CD4-positive, alpha-beta memory T cell (primary cell): ENCODE measurements at regions of chr6 and their contacts with region 1.

Region 1: GRCh38 chr6:16761471-16762267 is 409 bp upstream of the ATXN1 start:
- DNase-seq: peak; percentile 87 to 96 (median 89)
- H3K4me3 ChIP-seq: peak overlapping the region; percentile 75 to 84
- H3K4me3 Mint-ChIP-seq: peak overlapping the region; percentile 91 to 100 (median 98)
- H3K27ac ChIP-seq: peak overlapping the region; percentile 99
- H3K27ac Mint-ChIP-seq: peak overlapping the region; percentile 97 to 100 (median 99)
- H3K4me1 ChIP-seq: peaks cover 57% of the 10 kb centered on the region
- H3K4me1 Mint-ChIP-seq: peaks cover 46 to 87% (median 57%) of the 10 kb centered on the region in 4 donors
- H3K27me3 ChIP-seq: no peaks in the 10 kb centered on the region
- H3K27me3 Mint-ChIP-seq: peaks cover 0 to 4% of the 10 kb centered on the region in 2 donors

Region 2: DNA sequence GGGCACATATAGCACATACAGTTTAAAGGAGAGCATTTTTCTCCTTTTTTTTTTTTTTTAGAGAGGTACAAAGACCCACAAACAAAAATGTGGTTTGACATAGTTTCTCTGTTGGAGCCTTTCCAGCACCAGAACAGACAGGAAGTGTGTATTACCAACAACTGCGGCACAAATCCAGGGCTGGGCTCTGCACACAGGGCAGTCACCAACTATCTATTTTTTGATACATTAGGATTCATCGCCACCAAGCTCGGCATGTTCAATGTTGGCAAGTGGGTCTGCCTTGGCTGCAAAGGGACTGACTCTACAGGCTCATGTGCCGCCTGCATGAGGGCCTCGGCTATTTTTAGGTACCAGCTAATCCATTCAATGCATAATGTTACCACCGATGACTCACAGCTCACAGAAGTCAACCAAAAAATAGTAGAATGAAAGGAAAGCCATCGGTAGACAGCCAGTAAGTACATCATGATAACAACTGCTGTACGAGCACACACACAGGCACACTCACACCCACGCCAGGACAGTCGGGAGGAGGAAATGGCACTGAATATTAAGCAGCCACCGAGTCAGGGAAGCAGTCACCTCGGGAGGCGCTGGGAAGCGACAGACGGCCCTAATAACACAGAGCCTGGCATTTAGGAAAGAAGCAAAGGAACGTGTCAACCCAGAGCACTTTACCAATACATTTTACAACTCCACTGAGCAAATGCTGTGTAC is 441.7 kb before region 1 on chr6:
- CTCF ChIA-PET with region 1: interaction called, 27 read pairs
- POLR2A ChIA-PET with region 1: interaction called, 14 read pairs
- intact Hi-C with region 1: loop called (anchors 2 kb)
- DNase-seq: peak; percentile 80 to 94 (median 86)
- H3K4me3 ChIP-seq: peak overlapping the region; percentile 19 to 41
- H3K4me3 Mint-ChIP-seq: peak overlapping the region; percentile 76 to 89 (median 83)
- H3K27ac ChIP-seq: peak overlapping the region; percentile 82
- H3K27ac Mint-ChIP-seq: peak overlapping the region; percentile 93 to 98 (median 97)
- H3K4me1 ChIP-seq: peaks cover 84% of the 10 kb centered on the region
- H3K4me1 Mint-ChIP-seq: peaks cover 47 to 84% (median 71%) of the 10 kb centered on the region in 4 donors
- H3K27me3 ChIP-seq: no peaks in the 10 kb centered on the region
- H3K27me3 Mint-ChIP-seq: no peaks in the 10 kb centered on the region

Region 3: DNA sequence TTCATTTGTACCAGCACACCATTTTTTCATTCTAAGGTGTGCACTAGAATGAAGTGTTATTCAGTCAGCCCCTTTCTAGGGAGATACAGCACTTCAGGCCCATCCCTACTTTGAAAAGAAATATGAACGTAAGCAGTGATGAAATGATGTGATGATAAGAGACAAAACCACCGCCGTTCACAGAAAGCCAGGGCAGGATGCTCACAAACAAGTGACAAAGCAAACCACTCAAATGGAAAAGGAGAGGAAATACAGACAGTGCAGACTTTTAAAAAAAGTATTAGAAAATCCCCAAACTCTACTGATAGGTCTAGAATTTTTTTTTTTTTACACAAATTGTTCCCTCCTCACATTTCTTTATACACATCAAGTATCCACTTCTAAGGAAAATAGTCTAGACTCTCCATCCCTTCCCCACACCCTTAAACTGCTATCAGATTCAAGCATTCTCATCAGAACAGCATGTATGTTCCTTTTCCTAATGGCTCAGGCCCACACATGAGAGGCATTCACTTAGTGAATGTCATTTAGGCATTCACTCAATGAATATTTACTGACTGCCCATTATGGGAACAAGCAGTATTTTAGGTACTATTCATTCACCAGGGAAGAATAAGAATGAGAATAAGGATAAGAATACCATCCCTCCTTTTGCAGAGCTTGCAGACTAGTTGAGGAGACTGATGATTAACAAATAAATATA is 279.8 kb before region 1 on chr6:
- CTCF ChIA-PET with region 1: interaction called, 3 read pairs
- POLR2A ChIA-PET with region 1: interaction called, 16 read pairs
- intact Hi-C with region 1: loop called (anchors 1 kb)
- DNase-seq: peak; percentile 84 to 92 (median 88)
- H3K4me3 ChIP-seq: no peak overlapping the region
- H3K4me3 Mint-ChIP-seq: peak overlapping the region; percentile 3 to 76 (median 52)
- H3K27ac ChIP-seq: peak overlapping the region; percentile 75
- H3K27ac Mint-ChIP-seq: peak overlapping the region; percentile 88 to 99 (median 95)
- H3K4me1 ChIP-seq: peaks cover 81% of the 10 kb centered on the region
- H3K4me1 Mint-ChIP-seq: peaks cover 66 to 88% (median 77%) of the 10 kb centered on the region in 4 donors
- H3K27me3 ChIP-seq: no peaks in the 10 kb centered on the region
- H3K27me3 Mint-ChIP-seq: no peaks in the 10 kb centered on the region

Region 4: DNA sequence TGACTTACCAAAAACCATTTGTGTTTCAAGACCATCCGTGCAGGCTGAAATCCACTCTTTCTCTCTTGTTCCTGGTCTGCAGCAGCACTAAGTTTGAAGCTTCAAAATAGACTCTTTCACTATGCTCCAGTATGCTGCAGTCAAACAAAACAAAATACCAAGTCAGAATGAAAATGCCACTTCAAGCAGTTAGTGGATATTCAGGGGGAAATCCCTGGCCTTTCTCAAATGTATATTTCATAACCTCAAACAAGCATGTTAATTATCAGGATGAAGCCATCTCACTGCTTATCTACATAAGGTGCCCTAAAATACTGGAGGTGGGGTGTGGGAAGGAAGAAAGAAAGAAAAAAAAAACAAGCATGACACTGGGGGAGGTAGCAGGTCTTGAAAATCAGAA is 103.9 kb before region 1 on chr6:
- CTCF ChIA-PET with region 1: interaction called, 4 read pairs
- POLR2A ChIA-PET with region 1: interaction called, 30 read pairs
- intact Hi-C with region 1: loop called (anchors 5 kb)
- DNase-seq: peak in 3 of 5 donors; percentile 29 to 43 (median 31)
- H3K4me3 ChIP-seq: no peak overlapping the region
- H3K4me3 Mint-ChIP-seq: peak overlapping the region; percentile 55 to 85 (median 68)
- H3K27ac ChIP-seq: peak overlapping the region; percentile 44
- H3K27ac Mint-ChIP-seq: peak overlapping the region; percentile 77 to 95 (median 92)
- H3K4me1 ChIP-seq: peaks cover 75% of the 10 kb centered on the region
- H3K4me1 Mint-ChIP-seq: peaks cover 59 to 78% (median 66%) of the 10 kb centered on the region in 4 donors
- H3K27me3 ChIP-seq: no peaks in the 10 kb centered on the region
- H3K27me3 Mint-ChIP-seq: no peaks in the 10 kb centered on the region

Region 5: DNA sequence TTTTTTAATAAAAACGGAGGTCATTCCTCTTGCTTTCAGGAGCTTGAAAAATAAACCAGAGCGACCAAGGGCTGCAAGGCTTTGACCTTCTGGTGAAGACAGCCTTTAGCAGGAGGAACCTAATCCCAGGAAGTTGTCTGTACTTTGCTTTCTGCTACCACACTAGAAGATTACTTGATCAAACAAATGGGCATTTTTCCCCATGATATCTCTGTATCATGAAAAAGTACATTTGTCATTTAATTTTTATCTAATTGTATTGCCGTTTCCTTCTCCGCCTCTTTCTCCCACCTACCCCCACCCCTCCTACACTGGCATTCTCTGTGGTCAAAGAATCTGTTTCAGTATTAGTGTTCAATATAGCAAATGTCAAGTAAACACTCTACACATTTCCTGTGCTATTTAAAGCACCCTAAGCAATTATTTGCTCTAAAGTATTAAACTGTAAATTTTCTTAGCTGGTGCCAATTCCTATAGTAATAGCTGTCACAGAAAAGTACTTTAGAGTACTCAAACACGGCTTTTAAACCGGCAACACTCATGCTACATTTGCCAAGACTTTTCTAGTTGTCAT is 30.1 kb before region 1 on chr6:
- CTCF ChIA-PET with region 1: interaction called, 55 read pairs
- POLR2A ChIA-PET with region 1: interaction called, 32 read pairs
- intact Hi-C with region 1: loop called (anchors 2 kb)
- DNase-seq: peak; percentile 38 to 50 (median 44)
- H3K4me3 ChIP-seq: peak overlapping the region in 1 of 2 donors; percentile 41
- H3K4me3 Mint-ChIP-seq: peak overlapping the region; percentile 67 to 86 (median 79)
- H3K27ac ChIP-seq: peak overlapping the region; percentile 53
- H3K27ac Mint-ChIP-seq: peak overlapping the region; percentile 79 to 97 (median 84)
- H3K4me1 ChIP-seq: peaks cover 45% of the 10 kb centered on the region
- H3K4me1 Mint-ChIP-seq: peaks cover 39 to 68% (median 56%) of the 10 kb centered on the region in 4 donors
- H3K27me3 ChIP-seq: no peaks in the 10 kb centered on the region
- H3K27me3 Mint-ChIP-seq: no peaks in the 10 kb centered on the region

Region 6: DNA sequence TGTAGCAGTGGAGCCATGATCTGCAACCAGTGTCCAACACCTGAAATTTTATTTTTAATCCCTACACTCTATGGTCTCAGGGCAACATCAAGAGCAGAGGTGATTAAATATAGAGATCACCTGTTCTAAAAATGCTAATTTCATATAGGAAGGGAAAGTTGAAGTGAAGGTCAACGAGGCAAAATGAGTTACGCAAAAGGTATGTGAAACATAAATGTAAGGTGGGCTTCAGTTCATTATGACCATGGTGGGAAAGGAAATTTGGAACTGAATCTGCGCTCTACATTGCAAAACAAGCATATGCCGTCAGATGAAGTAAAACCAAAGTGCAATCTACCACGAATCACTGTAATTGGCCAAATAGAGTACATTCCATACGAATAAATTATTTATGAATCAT is 304.9 kb after region 1 on chr6:
- CTCF ChIA-PET with region 1: no interaction called
- POLR2A ChIA-PET with region 1: no interaction called
- intact Hi-C with region 1: no loop called
- DNase-seq: no peak
- H3K4me3 ChIP-seq: no peak overlapping the region
- H3K4me3 Mint-ChIP-seq: no peak overlapping the region
- H3K27ac ChIP-seq: no peak overlapping the region
- H3K27ac Mint-ChIP-seq: peak overlapping the region in 1 of 7 donors; percentile 2
- H3K4me1 ChIP-seq: no peaks in the 10 kb centered on the region
- H3K4me1 Mint-ChIP-seq: no peaks in the 10 kb centered on the region
- H3K27me3 ChIP-seq: no peaks in the 10 kb centered on the region
- H3K27me3 Mint-ChIP-seq: peaks cover 3 to 10% of the 10 kb centered on the region in 2 donors

Region 7: GRCh38 chr6:17706580-17707370 is 945.1 kb after region 1 on chr6 and contains the start of gene NUP153:
- CTCF ChIA-PET with region 1: no interaction called
- POLR2A ChIA-PET with region 1: interaction called, 3 read pairs
- intact Hi-C with region 1: loop called (anchors 2 kb)
- DNase-seq: peak; percentile 99 to 100 (median 99)
- H3K4me3 ChIP-seq: peak within 1 kb of the TSS; percentile 74 to 87
- H3K4me3 Mint-ChIP-seq: peak within 1 kb of the TSS; percentile 86 to 96 (median 93)
- H3K27ac ChIP-seq: peak within 1 kb of the TSS; percentile 99
- H3K27ac Mint-ChIP-seq: peak within 1 kb of the TSS; percentile 93 to 99 (median 97)
- H3K4me1 ChIP-seq: peaks cover 42% of the 10 kb centered on the region
- H3K4me1 Mint-ChIP-seq: peaks cover 22 to 52% (median 35%) of the 10 kb centered on the region in 4 donors
- H3K27me3 ChIP-seq: no peaks in the 10 kb centered on the region
- H3K27me3 Mint-ChIP-seq: no peaks in the 10 kb centered on the region
- total RNA-seq, gene NUP153: 57.0 to 60.7 TPM

Region 8: DNA sequence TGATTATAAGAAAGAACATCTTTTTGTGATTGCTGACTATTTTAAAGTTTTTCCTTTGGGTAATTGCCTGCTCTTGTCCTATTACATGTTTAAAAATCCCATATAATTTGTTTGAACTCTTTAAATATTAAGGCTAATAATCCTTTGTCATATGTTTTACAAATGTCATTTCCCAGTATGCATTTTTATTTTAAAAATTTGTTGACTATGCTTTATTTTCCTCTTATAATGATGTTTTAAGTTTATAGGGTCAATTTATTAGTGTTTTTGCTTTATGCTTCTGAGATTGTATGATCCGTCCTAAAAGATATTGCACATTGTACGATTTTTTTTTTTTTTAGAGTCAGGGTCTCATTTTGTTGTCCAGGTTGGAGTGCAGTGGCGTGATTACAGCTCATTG is 1922.7 kb after region 1 on chr6:
- CTCF ChIA-PET with region 1: no interaction called
- POLR2A ChIA-PET with region 1: no interaction called
- intact Hi-C with region 1: no loop called
- DNase-seq: no peak
- H3K4me3 ChIP-seq: no peak overlapping the region
- H3K4me3 Mint-ChIP-seq: no peak overlapping the region
- H3K27ac ChIP-seq: no peak overlapping the region
- H3K27ac Mint-ChIP-seq: no peak overlapping the region
- H3K4me1 ChIP-seq: no peaks in the 10 kb centered on the region
- H3K4me1 Mint-ChIP-seq: peaks cover 0 to 1% (median 0%) of the 10 kb centered on the region in 4 donors
- H3K27me3 ChIP-seq: no peaks in the 10 kb centered on the region
- H3K27me3 Mint-ChIP-seq: no peaks in the 10 kb centered on the region